AG04449 (cell line): ENCODE measurements at regions of chr1 and their contacts with region 1.

Region 1: GRCh38 chr1:223087291-223088255 is 55.5 kb downstream of the TLR5 start:
- DNase-seq: no peak
- H3K4me3 ChIP-seq: no peak overlapping the region
- CTCF ChIP-seq: no peak

Region 2: GRCh38 chr1:222732216-222733159 is 355.1 kb before region 1 on chr1:
- CTCF ChIA-PET with region 1: interaction called, 16 read pairs
- POLR2A ChIA-PET with region 1: no interaction called
- DNase-seq: no peak
- H3K4me3 ChIP-seq: no peak overlapping the region
- CTCF ChIP-seq: no peak

Region 3: DNA sequence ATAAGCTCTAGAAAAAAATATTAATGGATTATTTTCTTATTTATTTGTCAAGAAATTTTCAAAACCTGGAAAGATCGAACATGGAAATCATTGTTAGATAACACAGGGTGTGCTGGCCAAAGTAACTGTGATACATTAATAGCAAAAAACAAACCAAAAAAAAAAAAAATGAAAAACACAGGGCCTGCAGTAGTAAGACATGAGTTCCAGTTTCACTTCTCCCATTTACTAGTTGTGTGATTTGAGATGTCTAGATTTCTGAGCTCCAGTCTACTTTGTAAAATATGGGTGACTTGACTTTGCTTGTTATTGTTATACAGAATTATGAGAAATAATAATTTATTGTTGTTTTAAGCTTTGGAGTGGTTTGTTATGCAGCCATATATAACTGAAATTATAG is 336.9 kb before region 1 on chr1:
- CTCF ChIA-PET with region 1: interaction called, 10 read pairs
- POLR2A ChIA-PET with region 1: no interaction called
- DNase-seq: no peak
- H3K4me3 ChIP-seq: no peak overlapping the region
- CTCF ChIP-seq: no peak

Region 4: GRCh38 chr1:222798116-222798515 is 289.5 kb before region 1 on chr1:
- CTCF ChIA-PET with region 1: interaction called, 115 read pairs
- POLR2A ChIA-PET with region 1: no interaction called
- DNase-seq: no peak
- H3K4me3 ChIP-seq: no peak overlapping the region
- CTCF ChIP-seq: no peak

Region 5: DNA sequence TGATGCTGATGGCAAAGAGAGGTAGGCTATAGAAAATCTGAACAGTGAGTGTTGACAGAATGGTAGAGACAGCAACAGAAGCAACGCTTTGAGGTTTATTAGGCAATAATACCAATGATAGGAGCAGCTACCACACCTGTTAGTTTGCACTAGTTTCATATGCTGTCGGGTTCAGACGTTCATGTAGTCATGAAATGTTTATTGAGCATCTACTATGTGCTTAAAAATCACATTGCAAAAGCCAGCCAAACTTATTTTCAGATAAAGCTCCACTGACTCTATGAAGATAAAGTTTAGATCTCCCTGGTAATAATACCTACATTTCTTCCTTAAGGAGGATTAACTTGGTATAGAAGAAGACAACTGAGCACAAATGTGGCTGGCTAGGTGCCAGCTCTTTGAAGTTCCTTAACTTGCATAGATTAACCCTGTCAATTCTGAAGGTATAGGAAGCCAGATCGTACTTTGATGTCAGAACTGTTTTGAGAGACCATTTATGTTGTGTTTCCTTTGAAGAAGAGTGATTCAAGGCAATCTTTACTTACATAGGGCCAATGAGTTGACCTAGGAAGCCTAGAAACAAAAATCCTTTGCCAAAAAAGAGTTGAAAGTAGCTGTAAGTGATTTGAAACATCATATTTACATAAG is 201.3 kb before region 1 on chr1:
- CTCF ChIA-PET with region 1: no interaction called
- POLR2A ChIA-PET with region 1: no interaction called
- DNase-seq: no peak
- H3K4me3 ChIP-seq: no peak overlapping the region
- CTCF ChIP-seq: no peak

Region 6: DNA sequence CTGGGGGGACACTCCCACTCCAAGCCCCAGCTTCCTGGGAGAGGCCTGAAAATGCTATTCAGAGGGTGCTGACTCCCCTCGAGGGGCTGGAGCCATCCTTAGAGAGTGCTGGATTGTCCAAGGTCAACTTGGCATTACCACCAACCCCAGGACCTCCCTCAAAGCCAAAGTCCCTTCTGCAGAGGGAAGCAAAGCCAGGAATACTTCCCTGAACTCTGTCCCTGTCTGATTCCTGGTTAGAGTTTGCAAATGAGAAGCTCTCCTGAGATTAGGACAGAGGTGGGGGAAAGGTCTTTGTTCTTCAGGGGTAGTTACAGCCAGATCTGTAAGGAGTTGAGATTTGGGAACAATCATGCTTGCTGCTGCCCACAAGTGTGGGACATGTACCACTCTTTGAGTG is 10.1 kb after region 1 on chr1:
- CTCF ChIA-PET with region 1: interaction called, 19 read pairs
- POLR2A ChIA-PET with region 1: no interaction called
- DNase-seq: no peak
- H3K4me3 ChIP-seq: no peak overlapping the region
- CTCF ChIP-seq: no peak

Region 7: GRCh38 chr1:223123011-223123610 is 35.5 kb after region 1 on chr1:
- CTCF ChIA-PET with region 1: interaction called, 25 read pairs
- POLR2A ChIA-PET with region 1: no interaction called
- DNase-seq: no peak
- H3K4me3 ChIP-seq: no peak overlapping the region
- CTCF ChIP-seq: no peak

Region 8: GRCh38 chr1:223683586-223684487 is 596.3 kb after region 1 on chr1:
- CTCF ChIA-PET with region 1: interaction called, 20 read pairs
- POLR2A ChIA-PET with region 1: no interaction called
- DNase-seq: no peak
- H3K4me3 ChIP-seq: no peak overlapping the region
- CTCF ChIP-seq: peak; percentile 63